ENCODE measurements at regions of chr3 and their contacts with region 1.

Region 1: GRCh38 chr3:64739971-64740631 is 52.3 kb upstream of the ADAMTS9 start:
- DNase-seq: no peak
- ATAC-seq: peak; percentile 51
- H3K4me3 ChIP-seq: no peak overlapping the region
- H3K27ac ChIP-seq: peak overlapping the region; percentile 53 to 79
- H3K4me1 ChIP-seq: peaks cover 5 to 10% of the 10 kb centered on the region in 2 donors
- H3K27me3 ChIP-seq: no peaks in the 10 kb centered on the region

Region 2: GRCh38 chr3:64229903-64230302 is 510.2 kb before region 1 on chr3:
- intact Hi-C with region 1: no loop called
- DNase-seq: no peak
- ATAC-seq: no peak
- H3K4me3 ChIP-seq: no peak overlapping the region
- H3K27ac ChIP-seq: no peak overlapping the region
- H3K4me1 ChIP-seq: no peaks in the 10 kb centered on the region
- H3K27me3 ChIP-seq: no peaks in the 10 kb centered on the region

Region 3: GRCh38 chr3:64717872-64718613 is 22.1 kb before region 1 on chr3:
- intact Hi-C with region 1: loop called in 1 of 2 experiments (anchors 2 kb)
- DNase-seq: no peak
- ATAC-seq: no peak
- H3K4me3 ChIP-seq: no peak overlapping the region
- H3K27ac ChIP-seq: peak overlapping the region; percentile 75 to 89
- H3K4me1 ChIP-seq: peaks cover 2 to 16% of the 10 kb centered on the region in 2 donors
- H3K27me3 ChIP-seq: no peaks in the 10 kb centered on the region

Measured in aorta (tissue), 5 donors.